ENCODE measurements at regions of chr16 and their contacts with region 1.

Region 1: GRCh38 chr16:48156790-48157209 is 1.0 kb upstream of the ABCC12 start:
- DNase-seq: peak; percentile 91

Region 2: GRCh38 chr16:47037746-47038458 is 1118.9 kb before region 1 on chr16:
- intact Hi-C with region 1: loop called (anchors 5 kb)
- DNase-seq: peak; percentile 96

Measured in cardiac septum (tissue), 1 donor.